Caco-2 (cell line): ENCODE measurements at regions of chr4 and their contacts with region 1.

Region 1: GRCh38 chr4:113094802-113095201 is 45.3 kb downstream of the ANK2 start:
- DNase-seq: peak in 1 of 2 experiments; percentile 8
- H3K4me3 ChIP-seq: no peak overlapping the region
- H3K4me3 Mint-ChIP-seq: no peak overlapping the region
- H3K27ac Mint-ChIP-seq: no peak overlapping the region
- H3K4me1 ChIP-seq: no peaks in the 10 kb centered on the region
- H3K4me1 Mint-ChIP-seq: no peaks in the 10 kb centered on the region
- H3K27me3 ChIP-seq: no peaks in the 10 kb centered on the region
- H3K27me3 Mint-ChIP-seq: no peaks in the 10 kb centered on the region
- CTCF ChIP-seq: peak; percentile 80 to 85

Region 2: DNA sequence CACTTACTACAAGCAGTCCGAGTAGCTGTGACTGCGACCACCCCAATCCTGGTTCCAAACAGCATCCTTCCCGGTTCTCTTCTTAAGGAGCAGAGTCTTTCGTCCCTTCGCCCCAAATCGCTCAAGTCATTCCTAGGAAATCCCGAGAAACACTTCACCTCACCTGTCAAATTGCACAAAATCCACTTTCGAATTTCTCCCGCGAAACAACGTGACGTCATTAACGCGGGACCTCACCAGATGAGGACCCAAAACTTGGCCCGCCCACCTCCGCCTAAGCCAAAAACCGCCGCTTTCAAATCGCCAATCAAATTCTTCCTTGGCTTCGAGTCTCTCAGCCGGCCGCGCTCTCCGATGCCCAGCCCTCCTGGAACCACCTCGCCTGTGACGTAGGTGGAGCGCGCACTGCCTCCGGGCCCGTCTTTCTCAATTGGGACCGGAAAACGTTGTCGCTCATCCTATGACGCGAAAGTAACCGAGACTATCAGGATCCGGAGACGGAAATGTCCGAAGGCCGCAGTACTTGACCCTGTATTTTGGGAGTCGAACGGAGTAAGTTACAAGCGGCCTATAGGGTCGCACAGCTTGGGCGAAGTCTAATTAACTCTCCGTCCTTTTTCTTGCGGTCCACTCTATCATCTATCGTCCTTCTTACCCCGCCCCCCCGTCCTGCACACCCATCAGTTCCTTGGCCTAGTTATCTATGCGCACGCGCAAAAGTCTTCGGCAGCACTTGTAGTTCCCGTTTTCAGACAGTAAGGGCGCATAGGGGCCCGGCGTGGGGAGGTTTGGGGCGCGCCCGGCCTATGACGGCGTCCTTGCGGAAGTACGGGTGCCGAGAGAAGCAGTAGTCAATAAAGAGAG is 457.9 kb before region 1 on chr4 and contains the starts of genes LARP7 and ZGRF1:
- CTCF ChIA-PET with region 1: no interaction called
- POLR2A ChIA-PET with region 1: no interaction called
- intact Hi-C with region 1: loop called (anchors 10 kb)
- DNase-seq: peak; percentile 96 to 98
- H3K4me3 ChIP-seq: peak within 1 kb of the TSS; percentile 78
- H3K4me3 Mint-ChIP-seq: no peak within 1 kb of the TSS
- H3K27ac Mint-ChIP-seq: no peak within 1 kb of the TSS
- H3K4me1 ChIP-seq: peaks cover 7% of the 10 kb centered on the region; the same call in 1 of the 2 replicates
- H3K4me1 Mint-ChIP-seq: no peaks in the 10 kb centered on the region
- H3K27me3 ChIP-seq: no peaks in the 10 kb centered on the region
- H3K27me3 Mint-ChIP-seq: no peaks in the 10 kb centered on the region
- CTCF ChIP-seq: peak; percentile 59 to 65
- total RNA-seq, gene LARP7: 35.7 and 38.0 TPM in 2 replicates
- total RNA-seq, gene ZGRF1: 14.7 and 15.7 TPM in 2 replicates

Region 3: DNA sequence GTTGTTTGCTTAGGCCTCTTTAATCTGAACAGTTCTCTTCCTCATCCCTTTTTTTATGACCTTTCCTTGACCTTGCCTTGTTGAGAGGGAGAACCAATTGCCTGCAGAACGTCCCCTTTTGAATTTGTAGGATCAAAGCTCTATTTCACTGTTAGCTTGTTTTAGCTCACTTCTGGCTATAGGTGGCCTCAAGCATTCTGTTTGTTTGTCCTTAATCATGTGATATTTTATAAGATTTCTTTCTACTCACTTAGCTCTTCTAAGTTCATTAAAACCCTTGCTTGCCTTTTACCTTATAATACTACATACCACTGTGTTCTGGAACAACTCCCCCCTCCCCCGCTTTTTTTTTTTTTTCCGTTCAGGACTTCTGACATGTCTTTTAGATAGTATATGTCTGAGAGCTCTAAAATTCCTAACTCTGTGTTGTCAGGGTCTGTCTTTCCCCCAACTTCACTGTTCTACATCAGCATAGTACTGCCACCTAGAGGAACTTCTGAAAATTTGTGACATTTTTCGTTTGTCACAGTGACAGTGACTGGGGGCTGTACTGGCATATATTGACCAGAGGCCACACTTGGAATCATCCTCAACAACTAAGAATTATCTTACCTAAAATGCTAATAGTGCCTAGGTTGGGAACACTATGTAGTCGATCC is 329.4 kb before region 1 on chr4:
- CTCF ChIA-PET with region 1: no interaction called
- POLR2A ChIA-PET with region 1: no interaction called
- intact Hi-C with region 1: loop called (anchors 5 kb)
- DNase-seq: peak in 1 of 2 experiments; percentile 33
- H3K4me3 ChIP-seq: no peak overlapping the region
- H3K4me3 Mint-ChIP-seq: no peak overlapping the region
- H3K27ac Mint-ChIP-seq: no peak overlapping the region
- H3K4me1 ChIP-seq: 0 out of 2 replicates have a peak, but pooled peaks cover 3% of the 10 kb centered on the region
- H3K4me1 Mint-ChIP-seq: peaks cover 10% of the 10 kb centered on the region
- H3K27me3 ChIP-seq: no peaks in the 10 kb centered on the region
- H3K27me3 Mint-ChIP-seq: no peaks in the 10 kb centered on the region
- CTCF ChIP-seq: peak; percentile 39 to 45

Region 4: GRCh38 chr4:112853662-112854256 is 241.0 kb before region 1 on chr4:
- CTCF ChIA-PET with region 1: no interaction called
- POLR2A ChIA-PET with region 1: no interaction called
- intact Hi-C with region 1: loop called (anchors 10 kb)
- DNase-seq: no peak
- H3K4me3 ChIP-seq: no peak overlapping the region
- H3K4me3 Mint-ChIP-seq: no peak overlapping the region
- H3K27ac Mint-ChIP-seq: no peak overlapping the region
- H3K4me1 ChIP-seq: peaks cover 15% of the 10 kb centered on the region; the same call in 1 of the 2 replicates
- H3K4me1 Mint-ChIP-seq: peaks cover 18% of the 10 kb centered on the region
- H3K27me3 ChIP-seq: no peaks in the 10 kb centered on the region
- H3K27me3 Mint-ChIP-seq: no peaks in the 10 kb centered on the region
- CTCF ChIP-seq: peak; percentile 41 to 46

Region 5: DNA sequence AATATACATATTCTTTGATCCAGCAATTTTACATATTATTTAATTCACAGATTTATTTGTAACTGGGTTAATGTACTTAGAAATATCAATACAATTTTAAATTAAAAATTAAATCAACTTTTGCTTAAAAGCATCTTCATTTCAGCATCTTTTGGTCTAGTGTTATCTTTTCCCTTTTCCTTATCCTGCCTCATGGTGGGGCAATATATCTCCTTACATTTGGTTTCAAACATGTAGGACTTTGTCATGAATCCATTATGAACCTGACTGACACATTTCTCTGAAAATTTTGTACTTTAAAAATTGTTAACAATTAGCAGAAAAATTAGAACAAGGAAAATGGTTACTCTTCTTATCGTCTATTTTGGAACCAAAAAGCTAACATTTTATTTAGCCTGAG is 88.2 kb before region 1 on chr4:
- CTCF ChIA-PET with region 1: no interaction called
- POLR2A ChIA-PET with region 1: no interaction called
- intact Hi-C with region 1: loop called (anchors 1 kb)
- DNase-seq: no peak
- H3K4me3 ChIP-seq: no peak overlapping the region
- H3K4me3 Mint-ChIP-seq: no peak overlapping the region
- H3K27ac Mint-ChIP-seq: no peak overlapping the region
- H3K4me1 ChIP-seq: no peaks in the 10 kb centered on the region
- H3K4me1 Mint-ChIP-seq: no peaks in the 10 kb centered on the region
- H3K27me3 ChIP-seq: no peaks in the 10 kb centered on the region
- H3K27me3 Mint-ChIP-seq: no peaks in the 10 kb centered on the region
- CTCF ChIP-seq: no peak

Region 6: DNA sequence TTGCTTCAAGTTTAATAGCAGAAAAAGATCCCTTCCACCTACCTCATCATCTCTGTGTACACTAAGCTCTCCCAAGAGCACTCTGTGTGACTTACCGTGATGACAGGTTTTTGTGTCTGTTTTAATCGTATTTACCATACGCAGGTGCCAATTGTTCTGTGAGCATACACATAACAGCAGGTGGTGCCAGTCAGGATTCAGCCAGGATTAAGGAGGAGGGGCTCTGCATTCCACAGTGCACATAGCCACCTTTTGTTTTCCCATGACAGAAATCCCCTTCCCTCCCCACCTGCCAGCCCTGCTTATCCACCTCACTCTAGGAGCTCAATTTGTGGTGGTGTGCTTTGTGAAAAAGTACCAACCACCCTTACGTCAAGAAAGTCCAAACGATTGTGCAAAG is 30.6 kb before region 1 on chr4:
- CTCF ChIA-PET with region 1: no interaction called
- POLR2A ChIA-PET with region 1: no interaction called
- intact Hi-C with region 1: loop called (anchors 2 kb)
- DNase-seq: peak in 1 of 2 experiments; percentile 31
- H3K4me3 ChIP-seq: no peak overlapping the region
- H3K4me3 Mint-ChIP-seq: no peak overlapping the region
- H3K27ac Mint-ChIP-seq: no peak overlapping the region
- H3K4me1 ChIP-seq: 0 out of 2 replicates have a peak, but pooled peaks cover 3% of the 10 kb centered on the region
- H3K4me1 Mint-ChIP-seq: no peaks in the 10 kb centered on the region
- H3K27me3 ChIP-seq: no peaks in the 10 kb centered on the region
- H3K27me3 Mint-ChIP-seq: no peaks in the 10 kb centered on the region
- CTCF ChIP-seq: no peak